Mammary epithelial cell (primary cell): ENCODE measurements at regions of chr12 and their contacts with region 1.

Region 1: GRCh38 chr12:188910-189621 is 24.9 kb downstream of the SLC6A12 start:
- DNase-seq: no peak
- H3K4me3 ChIP-seq: peak overlapping the region in 2 of 3 experiments; percentile 47 to 49
- H3K27ac ChIP-seq: no peak overlapping the region
- H3K4me1 ChIP-seq: no peaks in the 10 kb centered on the region
- H3K27me3 ChIP-seq: no peaks in the 10 kb centered on the region
- CTCF ChIP-seq: peak; percentile 35 to 65

Region 2: DNA sequence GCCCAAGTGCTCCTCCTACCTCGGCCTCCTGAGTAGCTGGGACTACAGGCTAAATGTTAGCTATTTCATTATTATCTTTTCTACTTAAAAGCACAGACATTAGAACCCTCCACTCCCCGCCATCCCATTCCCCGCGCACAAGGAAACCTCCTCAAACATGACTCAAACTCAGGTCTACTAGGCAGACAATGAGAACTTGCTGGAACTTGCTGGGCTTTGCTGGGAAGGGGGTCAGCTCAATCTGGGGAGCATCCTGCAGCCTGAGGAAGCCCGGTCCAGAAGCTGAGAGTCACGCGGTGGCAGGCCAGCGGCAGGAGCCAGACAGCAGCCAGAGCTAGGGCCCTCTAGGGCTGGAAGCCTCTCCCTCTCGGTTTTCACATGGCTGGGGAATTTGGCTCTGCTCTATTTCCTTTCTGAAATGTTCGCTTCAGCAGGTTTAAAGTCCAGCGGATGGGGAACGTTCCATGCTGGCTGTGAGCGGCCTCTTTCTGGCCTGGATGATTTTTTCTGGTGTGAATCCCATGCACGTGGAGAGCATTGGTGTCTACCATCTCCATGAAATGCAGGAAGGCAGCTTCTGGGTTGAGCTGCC is 43.6 kb before region 1 on chr12:
- CTCF ChIA-PET with region 1: no interaction called
- dilution Hi-C with region 1: loop called (anchors 5 kb)
- in situ Hi-C with region 1: no loop called
- intact Hi-C with region 1: no loop called
- DNase-seq: no peak
- H3K4me3 ChIP-seq: no peak overlapping the region
- H3K27ac ChIP-seq: no peak overlapping the region
- H3K4me1 ChIP-seq: peaks cover 12% of the 10 kb centered on the region
- H3K27me3 ChIP-seq: peaks cover 3% of the 10 kb centered on the region
- CTCF ChIP-seq: no peak

Region 3: GRCh38 chr12:232731-233614 is 43.9 kb after region 1 on chr12:
- CTCF ChIA-PET with region 1: no interaction called
- dilution Hi-C with region 1: loop called (anchors 5 kb)
- in situ Hi-C with region 1: no loop called
- intact Hi-C with region 1: no loop called
- DNase-seq: no peak
- H3K4me3 ChIP-seq: no peak overlapping the region
- H3K27ac ChIP-seq: no peak overlapping the region
- H3K4me1 ChIP-seq: no peaks in the 10 kb centered on the region
- H3K27me3 ChIP-seq: no peaks in the 10 kb centered on the region
- CTCF ChIP-seq: no peak